Caco-2 (cell line): ENCODE measurements at regions of chr5 and their contacts with region 1.

Region 1: DNA sequence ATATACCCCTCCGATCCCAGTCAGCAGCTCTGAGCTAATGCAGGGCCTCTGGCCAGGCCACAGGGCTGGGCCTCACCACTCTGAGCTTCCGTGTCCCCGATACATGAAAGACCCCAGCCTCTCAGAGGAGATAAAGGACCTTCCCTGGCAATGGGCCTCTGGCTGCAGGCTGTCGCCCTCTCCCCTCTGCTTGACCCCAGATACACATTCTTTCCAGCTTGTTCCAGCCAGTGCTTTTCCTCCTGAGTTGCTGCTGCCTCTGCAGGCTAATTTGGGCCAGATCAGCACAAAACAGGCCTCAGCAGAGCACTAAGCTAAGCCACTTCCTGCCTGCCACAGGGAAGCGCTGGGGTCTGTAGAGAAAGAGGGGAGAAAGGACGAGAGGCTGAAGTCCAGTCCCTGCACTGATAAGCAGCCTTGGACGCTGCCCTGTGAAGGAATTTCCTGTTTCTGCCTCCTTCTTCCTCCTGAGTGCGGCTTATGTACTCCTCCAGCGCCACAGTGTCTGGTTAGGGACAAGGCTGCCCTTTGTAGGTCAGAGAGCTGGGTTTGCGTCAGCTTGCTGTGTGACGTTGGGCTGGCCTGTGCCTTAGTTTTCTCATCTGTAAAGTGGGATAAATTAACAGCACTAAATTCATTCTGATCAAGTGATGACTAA is 73.0 kb upstream of the IL17B start:
- DNase-seq: peak; percentile 89 to 97
- H3K4me3 ChIP-seq: no peak overlapping the region
- H3K4me3 Mint-ChIP-seq: peak overlapping the region; percentile 57
- H3K27ac Mint-ChIP-seq: peak overlapping the region; percentile 97
- H3K4me1 ChIP-seq: peaks cover 79% of the 10 kb centered on the region
- H3K4me1 Mint-ChIP-seq: peaks cover 56% of the 10 kb centered on the region
- H3K27me3 ChIP-seq: no peaks in the 10 kb centered on the region
- H3K27me3 Mint-ChIP-seq: no peaks in the 10 kb centered on the region
- CTCF ChIP-seq: peak in 1 of 2 experiments; percentile 53

Region 2: GRCh38 chr5:149422366-149423048 is 29.6 kb before region 1 on chr5:
- CTCF ChIA-PET with region 1: no interaction called
- POLR2A ChIA-PET with region 1: no interaction called
- intact Hi-C with region 1: no loop called
- DNase-seq: no peak
- H3K4me3 ChIP-seq: no peak overlapping the region
- H3K4me3 Mint-ChIP-seq: no peak overlapping the region
- H3K27ac Mint-ChIP-seq: no peak overlapping the region
- H3K4me1 ChIP-seq: no peaks in the 10 kb centered on the region
- H3K4me1 Mint-ChIP-seq: no peaks in the 10 kb centered on the region
- H3K27me3 ChIP-seq: no peaks in the 10 kb centered on the region
- H3K27me3 Mint-ChIP-seq: no peaks in the 10 kb centered on the region
- CTCF ChIP-seq: no peak

Region 3: DNA sequence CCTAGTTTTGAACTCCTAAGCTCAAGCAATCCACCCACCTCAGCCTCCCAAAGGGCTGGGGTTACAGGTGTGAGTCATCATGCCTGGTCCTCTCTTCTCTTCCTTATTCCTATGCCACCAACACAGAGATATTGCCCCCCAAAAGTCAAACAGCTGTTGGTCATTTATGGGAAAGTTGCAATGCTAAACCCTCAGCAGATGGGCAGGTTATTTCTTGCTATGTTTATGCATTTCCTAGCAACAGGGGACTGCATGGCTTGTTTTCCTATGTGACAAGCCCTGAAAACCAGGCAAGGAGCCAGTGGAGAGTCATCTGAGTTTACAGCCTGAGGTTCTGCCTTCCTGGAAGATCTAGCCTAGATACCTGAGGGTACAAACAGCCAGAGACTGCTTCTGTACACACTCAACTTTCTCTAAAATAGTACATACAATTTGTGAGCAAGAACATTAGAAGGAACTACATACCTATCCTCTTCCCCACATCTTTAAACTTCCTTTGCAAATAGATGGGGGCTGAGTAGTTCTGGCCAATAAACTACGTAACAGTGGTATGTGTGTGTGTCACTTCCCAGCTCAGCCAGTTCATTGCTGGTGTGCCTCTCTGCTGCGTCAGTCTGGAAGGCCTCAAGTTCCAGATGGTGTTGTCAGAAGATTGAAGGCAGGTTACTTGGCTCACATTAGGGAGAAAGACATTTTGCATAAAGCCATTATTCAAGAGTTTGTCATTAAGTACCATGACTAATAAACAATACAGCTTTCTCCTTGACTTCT is 33.7 kb after region 1 on chr5:
- CTCF ChIA-PET with region 1: interaction called, 4 read pairs
- POLR2A ChIA-PET with region 1: interaction called, 4 read pairs
- intact Hi-C with region 1: loop called (anchors 1 kb)
- DNase-seq: peak; percentile 33 to 49
- H3K4me3 ChIP-seq: no peak overlapping the region
- H3K4me3 Mint-ChIP-seq: no peak overlapping the region
- H3K27ac Mint-ChIP-seq: peak overlapping the region; percentile 36
- H3K4me1 ChIP-seq: peaks cover 39% of the 10 kb centered on the region
- H3K4me1 Mint-ChIP-seq: peaks cover 44% of the 10 kb centered on the region
- H3K27me3 ChIP-seq: no peaks in the 10 kb centered on the region
- H3K27me3 Mint-ChIP-seq: no peaks in the 10 kb centered on the region
- CTCF ChIP-seq: no peak

Region 4: DNA sequence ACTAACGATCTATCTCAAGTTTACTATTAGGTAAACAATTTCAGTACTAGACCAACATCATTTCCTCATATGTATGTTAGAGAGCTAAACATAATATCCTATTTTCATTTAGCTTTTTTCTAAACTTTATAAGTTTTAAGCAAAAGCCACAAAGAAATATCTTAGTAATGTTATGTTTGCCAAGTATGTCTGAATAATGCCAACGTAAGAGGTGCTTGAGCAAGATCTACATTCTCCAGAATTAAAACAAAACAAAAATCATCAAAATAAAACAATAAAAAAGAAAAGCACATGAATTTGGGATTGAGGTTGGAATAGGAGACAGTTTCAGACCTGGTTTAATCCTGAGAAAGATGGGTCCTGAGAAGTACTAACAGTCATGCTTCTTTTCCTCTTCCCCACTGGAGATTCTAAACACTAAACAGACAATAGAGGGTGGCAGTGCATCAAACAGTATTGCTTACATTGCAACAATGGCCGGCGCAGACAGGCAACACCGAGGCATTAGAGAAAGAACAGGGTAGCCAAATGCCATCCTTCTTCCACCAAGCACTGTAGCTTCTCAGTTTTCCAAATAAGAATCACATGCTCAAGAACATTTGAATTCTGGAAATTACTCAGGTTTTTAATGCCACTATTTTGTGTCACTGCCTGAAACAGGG is 65.5 kb after region 1 on chr5:
- CTCF ChIA-PET with region 1: interaction called, 13 read pairs
- POLR2A ChIA-PET with region 1: no interaction called
- intact Hi-C with region 1: no loop called
- DNase-seq: no peak
- H3K4me3 ChIP-seq: no peak overlapping the region
- H3K4me3 Mint-ChIP-seq: no peak overlapping the region
- H3K27ac Mint-ChIP-seq: no peak overlapping the region
- H3K4me1 ChIP-seq: no peaks in the 10 kb centered on the region
- H3K4me1 Mint-ChIP-seq: no peaks in the 10 kb centered on the region
- H3K27me3 ChIP-seq: no peaks in the 10 kb centered on the region
- H3K27me3 Mint-ChIP-seq: no peaks in the 10 kb centered on the region
- CTCF ChIP-seq: no peak